Heart right ventricle (tissue), 16 donors: ENCODE measurements at regions of chr15 and their contacts with region 1.

Region 1: GRCh38 chr15:96064351-96064756 is 266.1 kb upstream of the NR2F2 start:
- DNase-seq: no peak
- ATAC-seq: peak in 3 of 8 donors; percentile 7 to 87 (median 83)
- H3K4me3 ChIP-seq: no peak overlapping the region
- H3K27ac ChIP-seq: no peak overlapping the region
- H3K4me1 ChIP-seq: peaks cover 0 to 7% (median 0%) of the 10 kb centered on the region in 9 donors
- H3K27me3 ChIP-seq: no peaks in the 10 kb centered on the region
- CTCF ChIP-seq: no peak

Region 2: GRCh38 chr15:95944226-95944625 is 120.1 kb before region 1 on chr15:
- intact Hi-C with region 1: no loop called
- DNase-seq: no peak
- ATAC-seq: no peak
- H3K4me3 ChIP-seq: no peak overlapping the region
- H3K27ac ChIP-seq: no peak overlapping the region
- H3K4me1 ChIP-seq: no peaks in the 10 kb centered on the region
- H3K27me3 ChIP-seq: no peaks in the 10 kb centered on the region
- CTCF ChIP-seq: no peak

Region 3: GRCh38 chr15:96005906-96006305 is 58.4 kb before region 1 on chr15:
- intact Hi-C with region 1: loop called in 1 of 10 experiments (anchors 2 kb)
- DNase-seq: no peak
- ATAC-seq: no peak
- H3K4me3 ChIP-seq: no peak overlapping the region
- H3K27ac ChIP-seq: no peak overlapping the region
- H3K4me1 ChIP-seq: no peaks in the 10 kb centered on the region
- H3K27me3 ChIP-seq: no peaks in the 10 kb centered on the region
- CTCF ChIP-seq: no peak